CD4-positive, alpha-beta memory T cell (primary cell): ENCODE measurements at regions of chr18 and their contacts with region 1.

Region 1: GRCh38 chr18:56645415-56646016 is 5.6 kb upstream of the WDR7 start:
- DNase-seq: peak in 4 of 5 donors; percentile 23 to 39 (median 29)
- H3K4me3 ChIP-seq: no peak overlapping the region
- H3K4me3 Mint-ChIP-seq: no peak overlapping the region
- H3K27ac ChIP-seq: no peak overlapping the region
- H3K27ac Mint-ChIP-seq: no peak overlapping the region
- H3K4me1 ChIP-seq: peaks cover 5% of the 10 kb centered on the region
- H3K4me1 Mint-ChIP-seq: peaks cover 2 to 16% (median 10%) of the 10 kb centered on the region in 4 donors
- H3K27me3 ChIP-seq: no peaks in the 10 kb centered on the region
- H3K27me3 Mint-ChIP-seq: no peaks in the 10 kb centered on the region

Region 2: GRCh38 chr18:58124475-58124874 is 1479.0 kb after region 1 on chr18:
- CTCF ChIA-PET with region 1: no interaction called
- POLR2A ChIA-PET with region 1: no interaction called
- intact Hi-C with region 1: loop called (anchors 5 kb)
- DNase-seq: no peak
- H3K4me3 ChIP-seq: no peak overlapping the region
- H3K4me3 Mint-ChIP-seq: peak overlapping the region in 2 of 8 donors; percentile 0 to 2
- H3K27ac ChIP-seq: no peak overlapping the region
- H3K27ac Mint-ChIP-seq: no peak overlapping the region
- H3K4me1 ChIP-seq: no peaks in the 10 kb centered on the region
- H3K4me1 Mint-ChIP-seq: peaks cover 0 to 5% (median 3%) of the 10 kb centered on the region in 4 donors
- H3K27me3 ChIP-seq: no peaks in the 10 kb centered on the region
- H3K27me3 Mint-ChIP-seq: no peaks in the 10 kb centered on the region